ENCODE measurements at regions of chr14 and their contacts with region 1.

Region 1: GRCh38 chr14:30005114-30005808 is 77.6 kb upstream of the PRKD1 start:
- DNase-seq: no peak

Region 2: DNA sequence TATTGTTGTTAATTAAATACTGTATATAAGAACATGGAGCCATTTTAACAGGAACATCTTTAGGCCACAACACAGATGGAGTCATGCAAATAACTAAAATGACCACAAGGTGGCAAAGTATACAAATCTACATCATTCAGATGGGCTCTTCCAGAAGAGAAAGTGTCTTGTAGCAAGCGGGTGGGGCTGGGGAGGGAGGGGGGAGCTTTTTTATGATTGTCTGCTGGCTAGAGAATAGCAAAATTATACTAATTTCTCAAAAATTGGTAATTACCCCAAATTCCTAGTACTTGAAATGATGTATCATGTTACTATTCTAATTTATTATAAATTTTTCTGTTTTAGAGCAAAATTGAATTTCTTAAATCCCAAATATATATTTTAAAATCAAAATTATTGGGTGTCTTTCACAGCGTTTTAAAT is 456.3 kb before region 1 on chr14:
- intact Hi-C with region 1: loop called (anchors 5 kb)
- DNase-seq: no peak

Region 3: DNA sequence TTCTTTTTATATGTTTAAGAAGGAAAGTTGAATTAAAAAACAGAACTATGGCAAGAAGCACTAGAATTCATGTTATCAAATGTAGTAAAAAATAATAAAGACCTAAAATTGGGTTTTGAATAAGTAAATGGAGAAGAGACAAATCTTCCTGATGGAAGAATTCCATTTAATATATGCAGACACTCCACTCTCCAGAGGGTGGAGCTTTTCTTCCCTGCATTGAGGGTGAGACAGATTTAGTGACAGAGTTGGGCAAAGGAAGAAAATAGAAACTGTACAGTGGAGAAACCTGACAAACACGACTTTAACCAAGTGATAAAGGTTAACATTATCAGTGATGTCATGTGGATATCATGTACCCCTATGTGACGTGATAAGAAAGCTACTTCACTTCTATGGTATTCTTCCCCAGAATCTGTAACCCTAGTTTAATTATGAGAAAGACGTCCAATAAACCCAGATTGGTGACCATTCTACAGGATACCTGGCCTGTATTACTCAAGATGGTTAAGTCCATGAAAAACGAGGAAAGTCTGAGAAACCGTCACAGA is 295.2 kb before region 1 on chr14:
- intact Hi-C with region 1: loop called (anchors 10 kb)
- DNase-seq: no peak